ENCODE measurements at regions of chr3 and their contacts with region 1.

Region 1: DNA sequence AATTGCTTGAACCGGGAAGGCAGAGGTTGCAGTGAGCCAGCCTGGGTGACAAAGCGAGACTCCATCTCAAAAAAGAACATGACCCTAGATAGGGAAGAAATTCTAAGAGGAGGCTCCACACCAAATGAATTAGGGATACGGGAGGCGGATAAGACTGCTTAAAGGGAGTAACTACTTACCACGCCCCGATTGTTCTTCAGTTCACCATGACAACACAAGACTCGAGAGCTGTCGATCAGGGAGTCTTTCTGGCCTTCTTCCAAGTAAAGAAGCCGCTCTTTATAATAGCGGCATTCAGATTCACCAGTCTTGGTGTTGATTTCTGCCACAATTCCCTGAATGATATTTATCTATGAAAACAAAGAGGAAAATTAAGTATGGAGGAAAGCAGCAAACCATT is 53.9 kb upstream of the TASOR start:
- DNase-seq: no peak
- ATAC-seq: no peak
- H3K4me3 ChIP-seq: no peak overlapping the region
- H3K4me3 Mint-ChIP-seq: no peak overlapping the region
- H3K27ac ChIP-seq: peak overlapping the region in 1 of 2 experiments; percentile 14
- H3K27ac Mint-ChIP-seq: peak overlapping the region; percentile 64
- H3K4me1 ChIP-seq: peaks cover 32% of the 10 kb centered on the region
- H3K4me1 Mint-ChIP-seq: peaks cover 49% of the 10 kb centered on the region
- H3K27me3 ChIP-seq: no peaks in the 10 kb centered on the region
- H3K27me3 Mint-ChIP-seq: no peaks in the 10 kb centered on the region
- CTCF ChIP-seq: no peak

Region 2: GRCh38 chr3:56753206-56753820 is 16.3 kb after region 1 on chr3:
- CTCF ChIA-PET with region 1: interaction called, 3 read pairs
- POLR2A ChIA-PET with region 1: interaction called, 9 read pairs
- intact Hi-C with region 1: loop called (anchors 1 to 2 kb)
- DNase-seq: peak in 5 of 9 experiments; percentile 22 to 56 (median 45)
- ATAC-seq: peak; percentile 27
- H3K4me3 ChIP-seq: no peak overlapping the region
- H3K4me3 Mint-ChIP-seq: peak overlapping the region; percentile 47
- H3K27ac ChIP-seq: peak overlapping the region; percentile 62 to 79
- H3K27ac Mint-ChIP-seq: peak overlapping the region; percentile 100
- H3K4me1 ChIP-seq: peaks cover 52% of the 10 kb centered on the region
- H3K4me1 Mint-ChIP-seq: peaks cover 66% of the 10 kb centered on the region
- H3K27me3 ChIP-seq: no peaks in the 10 kb centered on the region
- H3K27me3 Mint-ChIP-seq: no peaks in the 10 kb centered on the region
- CTCF ChIP-seq: no peak

Region 3: DNA sequence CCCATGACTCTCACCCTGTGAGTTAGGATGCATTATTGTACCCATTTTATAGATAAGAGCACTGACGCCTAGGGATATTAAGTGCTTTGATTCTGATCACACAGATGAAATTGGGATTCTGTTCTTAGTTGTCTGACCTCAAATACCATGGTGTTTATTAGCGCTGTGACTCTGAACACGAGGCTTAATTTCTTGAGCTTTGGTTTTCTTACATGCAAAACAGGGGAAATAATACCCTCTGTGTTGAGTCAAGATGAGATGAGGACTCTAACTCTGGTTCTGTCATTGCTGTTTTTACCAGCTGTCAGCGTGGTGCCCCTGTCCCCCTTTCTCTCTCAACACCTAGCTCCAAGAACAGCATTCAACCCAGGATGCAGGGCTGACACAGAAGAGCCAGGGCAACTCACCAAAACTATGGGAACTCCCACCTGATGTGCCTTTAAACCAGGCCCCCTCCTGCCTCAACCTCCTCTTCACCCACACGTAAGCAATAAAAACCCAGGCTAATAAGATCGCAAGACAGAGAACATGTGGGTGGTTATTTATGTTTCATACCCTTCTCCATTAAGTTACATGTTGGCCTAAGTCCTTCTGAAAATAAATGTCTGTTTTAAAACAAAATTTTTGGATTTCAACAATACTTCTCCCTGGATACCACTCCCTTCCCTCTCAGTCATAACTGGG is 223.4 kb after region 1 on chr3:
- CTCF ChIA-PET with region 1: no interaction called
- POLR2A ChIA-PET with region 1: no interaction called
- intact Hi-C with region 1: no loop called
- DNase-seq: no peak
- ATAC-seq: no peak
- H3K4me3 ChIP-seq: no peak overlapping the region
- H3K4me3 Mint-ChIP-seq: no peak overlapping the region
- H3K27ac ChIP-seq: no peak overlapping the region
- H3K27ac Mint-ChIP-seq: no peak overlapping the region
- H3K4me1 ChIP-seq: no peaks in the 10 kb centered on the region
- H3K4me1 Mint-ChIP-seq: no peaks in the 10 kb centered on the region
- H3K27me3 ChIP-seq: peaks cover 0 to 3% of the 10 kb centered on the region in 2 experiments
- H3K27me3 Mint-ChIP-seq: no peaks in the 10 kb centered on the region
- CTCF ChIP-seq: no peak